SK-MEL-5 (cell line): ENCODE measurements at regions of chr10 and their contacts with region 1.

Region 1: GRCh38 chr10:88243836-88244730 is 339.0 kb downstream of the RNLS start:
- DNase-seq: peak; percentile 37

Region 2: DNA sequence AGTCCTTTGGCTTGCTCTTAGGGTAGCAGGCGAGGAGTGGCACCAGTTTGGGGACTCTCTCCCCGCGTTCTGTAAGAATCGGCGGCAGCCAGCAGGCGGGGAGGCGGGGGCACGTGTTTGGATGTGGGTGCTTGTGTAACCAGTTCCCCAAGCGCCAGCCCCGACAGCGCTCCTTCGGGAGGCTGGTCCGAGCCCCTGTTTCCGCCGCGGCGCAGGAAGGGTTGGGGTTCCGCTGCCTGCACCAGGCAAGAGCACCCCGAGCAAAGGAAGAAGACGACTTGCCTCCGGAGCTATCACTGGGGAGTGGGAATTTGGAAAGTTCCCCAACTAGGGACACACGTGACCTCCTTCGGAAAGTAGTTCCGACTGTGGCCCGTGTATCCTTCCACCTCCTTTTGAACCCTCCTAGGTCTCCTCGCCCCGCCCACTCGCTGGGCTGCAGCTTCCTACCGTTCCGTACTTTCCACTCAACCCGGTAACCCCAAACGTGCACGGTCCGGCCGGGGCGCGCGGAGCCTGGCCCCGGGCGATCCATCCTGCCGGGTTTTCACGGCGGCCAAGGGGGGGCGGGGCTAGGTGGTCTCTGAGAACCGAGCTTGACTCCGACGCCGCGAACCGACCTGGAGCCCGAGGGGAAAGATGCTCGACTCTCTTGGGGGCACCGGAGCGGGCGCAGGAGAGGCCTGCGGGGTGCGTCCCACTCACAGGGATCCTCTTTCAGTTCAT is 382.0 kb before region 1 on chr10:
- in situ Hi-C with region 1: loop called (anchors 25 kb)
- DNase-seq: peak; percentile 32

Region 3: DNA sequence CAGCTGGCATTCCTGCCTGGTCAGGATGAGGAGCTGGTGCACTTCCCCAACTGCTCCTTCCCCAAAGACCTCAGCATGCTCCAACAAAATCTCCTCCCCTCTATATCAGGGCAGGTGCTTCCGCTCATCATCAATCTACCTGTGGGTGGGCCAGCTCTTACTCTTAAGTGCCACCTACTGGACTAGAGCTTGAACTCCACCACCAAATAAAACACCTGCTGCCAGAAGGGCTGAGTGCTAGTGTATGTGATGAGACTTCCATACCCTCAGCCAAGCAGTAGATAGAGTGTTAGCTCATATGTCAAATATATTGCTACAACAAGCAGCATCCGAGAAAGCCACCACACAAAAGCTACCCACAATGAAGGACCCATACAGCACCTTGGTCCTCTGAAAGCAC is 74.7 kb after region 1 on chr10:
- in situ Hi-C with region 1: no loop called
- DNase-seq: no peak